ENCODE measurements at regions of chr5 and their contacts with region 1.

Region 1: DNA sequence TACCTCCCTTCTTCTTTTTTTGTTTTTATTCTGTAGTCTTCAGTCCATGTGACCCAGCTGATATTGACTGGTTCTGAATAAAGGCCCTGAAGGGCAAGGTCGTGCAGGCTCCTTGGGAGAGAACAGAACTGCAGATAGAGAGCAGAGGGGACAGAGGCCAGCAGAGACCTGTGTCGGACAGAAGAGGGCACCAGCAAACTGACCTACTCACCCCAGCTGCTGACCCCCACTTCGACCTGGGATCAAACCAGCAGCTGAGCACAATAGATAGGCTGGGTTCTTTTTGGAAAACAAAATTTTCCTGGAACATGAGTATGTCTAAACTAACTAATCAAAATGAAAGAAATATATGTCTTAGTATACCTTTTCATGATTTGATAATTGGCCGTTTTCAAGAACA is 695.1 kb downstream of the NR2F1-AS1 start:
- DNase-seq: peak; percentile 53
- ATAC-seq: peak; percentile 90
- H3K4me3 ChIP-seq: no peak overlapping the region
- H3K27ac ChIP-seq: no peak overlapping the region
- H3K4me1 ChIP-seq: peaks cover 48% of the 10 kb centered on the region
- H3K27me3 ChIP-seq: no peaks in the 10 kb centered on the region
- CTCF ChIP-seq: peak; percentile 88
- EP300 ChIP-seq: no peak
- POLR2A ChIP-seq: no peak
- RAD21 ChIP-seq: peak; percentile 85

Region 2: DNA sequence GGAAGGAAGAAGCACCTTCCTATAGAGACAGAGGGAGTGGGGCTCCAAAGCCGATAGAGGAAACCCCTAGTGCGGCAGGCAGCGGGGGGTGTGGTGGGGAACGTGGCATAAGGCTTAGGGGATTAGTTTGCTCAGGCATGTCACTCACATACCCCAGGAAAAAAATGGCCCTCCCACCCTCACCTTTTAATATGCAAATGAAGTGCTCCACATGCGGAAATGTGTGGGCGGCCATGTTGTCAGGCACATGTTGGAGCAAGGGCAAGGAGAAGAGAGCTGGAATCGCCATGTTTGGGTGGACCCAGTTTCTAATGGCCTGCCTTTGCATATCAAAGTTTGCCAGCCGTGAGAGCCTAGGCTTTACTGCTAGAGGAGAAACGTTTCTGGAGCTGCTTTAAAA is 63.8 kb before region 1 on chr5:
- CTCF ChIA-PET with region 1: no interaction called
- POLR2A ChIA-PET with region 1: no interaction called
- in situ Hi-C with region 1: no loop called
- intact Hi-C with region 1: no loop called
- DNase-seq: no peak
- ATAC-seq: no peak
- H3K4me3 ChIP-seq: no peak overlapping the region
- H3K27ac ChIP-seq: no peak overlapping the region
- H3K4me1 ChIP-seq: no peaks in the 10 kb centered on the region
- H3K27me3 ChIP-seq: no peaks in the 10 kb centered on the region; a peak in 1 of 5 replicates
- CTCF ChIP-seq: no peak
- EP300 ChIP-seq: no peak
- POLR2A ChIP-seq: no peak
- RAD21 ChIP-seq: no peak

Region 3: DNA sequence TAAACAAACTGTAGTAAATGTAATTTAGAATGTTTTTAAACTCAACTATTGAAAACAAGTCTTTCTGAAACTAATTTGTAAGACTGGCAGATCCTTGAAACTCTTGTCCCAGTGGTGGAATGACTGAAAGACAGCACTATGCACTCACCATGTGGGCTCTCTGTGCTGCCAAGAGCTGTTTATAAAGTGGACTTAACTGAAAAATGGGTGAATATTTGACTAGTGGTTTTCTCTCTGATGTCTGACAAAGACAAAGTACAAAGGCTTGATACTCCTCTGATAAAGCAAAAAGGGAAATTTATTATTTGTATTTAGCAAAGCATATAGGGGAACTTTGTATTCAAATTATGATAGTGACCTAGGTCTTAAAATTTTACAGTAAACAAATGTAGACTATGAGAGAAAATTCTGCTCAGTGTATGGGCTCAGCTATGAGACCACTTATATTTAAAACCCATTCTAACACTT is 59.7 kb after region 1 on chr5:
- CTCF ChIA-PET with region 1: no interaction called
- POLR2A ChIA-PET with region 1: interaction called, 10 read pairs
- in situ Hi-C with region 1: no loop called
- intact Hi-C with region 1: loop called (anchors 1 kb)
- DNase-seq: peak; percentile 95
- ATAC-seq: peak; percentile 97
- H3K4me3 ChIP-seq: 0 out of 6 replicates have a peak overlapping the region, but pooled peaks of 1 of the 3 experiments have one; percentile 1
- H3K27ac ChIP-seq: peak overlapping the region; percentile 91
- H3K4me1 ChIP-seq: peaks cover 70% of the 10 kb centered on the region
- H3K27me3 ChIP-seq: no peaks in the 10 kb centered on the region
- CTCF ChIP-seq: no peak
- EP300 ChIP-seq: peak in 1 of 2 experiments; percentile 92; a peak in 2 of 4 replicates
- POLR2A ChIP-seq: peak in 1 of 2 experiments; percentile 61; a peak in 3 of 4 replicates
- RAD21 ChIP-seq: no peak

Region 4: DNA sequence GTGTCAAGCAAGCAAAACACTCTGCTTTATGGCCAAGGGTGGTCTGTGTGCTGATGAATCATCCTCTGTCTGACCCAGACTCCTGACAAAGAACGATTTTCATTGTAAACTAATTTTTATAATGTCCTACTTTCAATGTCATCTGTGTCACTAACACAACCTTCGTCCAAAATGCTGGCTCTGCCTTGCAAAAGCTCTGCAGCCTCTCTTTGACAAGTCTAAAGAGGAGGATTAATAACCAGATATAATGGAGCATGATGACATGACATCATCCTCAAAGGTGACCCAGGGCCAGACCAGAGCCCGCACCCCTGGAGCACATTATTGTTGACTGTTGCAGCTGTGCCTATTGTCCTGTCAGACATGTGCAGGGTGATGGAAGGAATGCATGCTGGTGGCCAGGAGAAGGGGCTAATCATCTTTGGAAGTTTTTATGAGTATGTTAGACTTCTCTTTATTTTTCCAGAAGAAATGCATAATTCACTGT is 105.7 kb after region 1 on chr5:
- CTCF ChIA-PET with region 1: no interaction called
- POLR2A ChIA-PET with region 1: no interaction called
- in situ Hi-C with region 1: no loop called
- intact Hi-C with region 1: loop called (anchors 5 kb)
- DNase-seq: no peak
- ATAC-seq: no peak
- H3K4me3 ChIP-seq: no peak overlapping the region
- H3K27ac ChIP-seq: no peak overlapping the region
- H3K4me1 ChIP-seq: peaks cover 7% of the 10 kb centered on the region; the same call in 1 of the 2 replicates
- H3K27me3 ChIP-seq: no peaks in the 10 kb centered on the region
- CTCF ChIP-seq: no peak
- EP300 ChIP-seq: no peak
- POLR2A ChIP-seq: no peak
- RAD21 ChIP-seq: no peak

Region 5: GRCh38 chr5:93246090-93246855 is 360.3 kb after region 1 on chr5:
- CTCF ChIA-PET with region 1: no interaction called
- POLR2A ChIA-PET with region 1: no interaction called
- in situ Hi-C with region 1: loop called (anchors 10 kb)
- intact Hi-C with region 1: loop called (anchors 5 kb)
- DNase-seq: peak; percentile 100
- ATAC-seq: peak; percentile 100
- H3K4me3 ChIP-seq: peak overlapping the region in 1 of 3 experiments; percentile 32; a peak in 1 of 6 replicates
- H3K27ac ChIP-seq: peak overlapping the region; percentile 88
- H3K4me1 ChIP-seq: peaks cover 72% of the 10 kb centered on the region
- H3K27me3 ChIP-seq: no peaks in the 10 kb centered on the region
- CTCF ChIP-seq: no peak
- EP300 ChIP-seq: peak; percentile 86 to 99
- POLR2A ChIP-seq: no peak
- RAD21 ChIP-seq: peak; percentile 18; the same call in 1 of the 2 replicates

Measured in HepG2 (cell line).